GM12878 (cell line): ENCODE measurements at regions of chr18 and their contacts with region 1.

Region 1: GRCh38 chr18:80147418-80148325 is 38.6 kb downstream of the ADNP2 start:
- DNase-seq: peak; percentile 60
- ATAC-seq: peak; percentile 96
- H3K4me3 ChIP-seq: peak overlapping the region; percentile 72
- H3K27ac ChIP-seq: no peak overlapping the region
- H3K4me1 ChIP-seq: peaks cover 5% of the 10 kb centered on the region
- H3K27me3 ChIP-seq: no peaks in the 10 kb centered on the region
- CTCF ChIP-seq: no peak
- EP300 ChIP-seq: no peak
- POLR2A ChIP-seq: peak; percentile 77; the same call in 1 of the 2 replicates
- RAD21 ChIP-seq: no peak

Region 2: DNA sequence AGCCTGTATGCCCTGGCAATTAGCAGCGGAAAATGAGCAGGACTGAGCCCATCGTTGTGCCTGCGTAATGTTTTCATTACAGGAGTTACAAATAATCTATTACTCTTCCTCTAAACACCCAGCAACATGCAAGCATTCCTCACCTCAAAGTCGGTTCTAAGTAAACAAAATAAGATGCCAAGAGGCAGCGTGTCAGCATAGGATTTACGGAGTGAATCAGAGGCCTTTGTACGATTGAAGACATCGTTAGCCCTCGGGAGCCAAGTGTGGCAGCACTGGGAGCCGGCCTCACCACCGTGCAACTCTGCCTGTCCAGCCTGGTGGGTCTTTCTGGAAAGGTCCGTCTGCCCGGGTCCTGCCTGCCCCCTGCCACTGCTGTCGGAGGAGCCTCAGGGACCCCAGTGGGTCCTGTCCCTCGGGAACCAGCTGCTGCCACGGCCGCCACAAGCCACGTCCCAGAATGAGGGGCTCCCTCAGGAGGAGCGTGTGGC is 548.2 kb before region 1 on chr18:
- CTCF ChIA-PET with region 1: no interaction called
- POLR2A ChIA-PET with region 1: no interaction called
- RAD21 ChIA-PET with region 1: no interaction called
- SMC1A ChIA-PET with region 1: no interaction called
- in situ Hi-C with region 1: no loop called
- intact Hi-C with region 1: no loop called
- DNase-seq: no peak
- ATAC-seq: no peak
- H3K4me3 ChIP-seq: no peak overlapping the region
- H3K27ac ChIP-seq: no peak overlapping the region
- H3K4me1 ChIP-seq: no peaks in the 10 kb centered on the region
- H3K27me3 ChIP-seq: no peaks in the 10 kb centered on the region; a peak in 2 of 4 replicates
- CTCF ChIP-seq: no peak
- EP300 ChIP-seq: no peak
- POLR2A ChIP-seq: no peak
- RAD21 ChIP-seq: no peak

Region 3: DNA sequence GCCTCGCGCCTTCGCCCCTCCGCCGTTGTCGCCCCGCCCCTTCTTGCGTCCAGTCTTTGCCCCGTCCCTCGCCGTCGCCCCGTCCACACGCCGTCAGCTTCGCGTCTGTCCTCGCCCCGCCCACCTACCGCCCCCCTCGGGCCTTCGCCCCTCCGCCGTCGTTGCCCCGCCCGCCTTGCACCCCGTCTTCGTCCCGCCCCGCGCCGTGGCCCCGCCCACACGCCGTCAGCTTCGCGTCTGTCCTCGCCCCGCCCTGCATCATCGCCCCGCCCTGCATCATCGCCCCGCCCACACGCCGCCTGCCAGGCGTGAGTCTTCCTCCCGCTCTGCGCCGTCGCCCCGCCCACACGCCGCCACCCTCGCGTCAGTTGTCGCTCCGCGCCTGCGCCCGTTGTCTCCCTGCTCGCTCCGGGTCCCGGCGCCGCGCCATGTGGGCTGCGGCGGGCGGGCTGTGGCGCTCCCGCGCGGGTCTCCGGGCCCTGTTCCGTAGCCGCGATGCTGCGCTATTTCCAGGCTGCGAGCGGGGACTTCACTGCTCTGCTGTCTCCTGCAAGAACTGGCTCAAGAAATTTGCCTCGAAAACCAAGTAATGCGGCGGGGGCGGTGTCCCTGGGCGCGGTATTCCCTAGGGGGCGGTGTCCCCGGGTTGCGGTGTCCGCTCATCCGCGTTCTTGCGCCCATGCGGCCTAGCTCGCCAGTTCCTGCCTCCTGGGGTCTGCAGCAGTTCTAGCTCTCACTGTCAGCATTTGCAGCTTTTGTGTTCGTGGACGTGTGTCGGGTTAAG is 113.4 kb before region 1 on chr18 and contains the start of gene RBFA:
- CTCF ChIA-PET with region 1: interaction called, 5 read pairs
- POLR2A ChIA-PET with region 1: no interaction called
- RAD21 ChIA-PET with region 1: interaction called, 3 read pairs
- SMC1A ChIA-PET with region 1: interaction called, 3 read pairs
- in situ Hi-C with region 1: no loop called
- intact Hi-C with region 1: loop called (anchors 5 kb)
- DNase-seq: peak; percentile 94
- ATAC-seq: peak; percentile 88
- H3K4me3 ChIP-seq: peak within 1 kb of the TSS; percentile 79
- H3K27ac ChIP-seq: peak within 1 kb of the TSS; percentile 64
- H3K4me1 ChIP-seq: peaks cover 3% of the 10 kb centered on the region; the same call in 1 of the 2 replicates
- H3K27me3 ChIP-seq: no peaks in the 10 kb centered on the region
- CTCF ChIP-seq: peak in 2 of 3 experiments; percentile 11 to 23; a peak in 2 of 6 replicates
- EP300 ChIP-seq: 0 out of 4 replicates have a peak, but pooled peaks of 1 of the 2 experiments have one; percentile 18
- POLR2A ChIP-seq: peak; percentile 85
- RAD21 ChIP-seq: no peak
- polyA plus RNA-seq, gene RBFA: 7.2 to 9.1 TPM